HepG2 (cell line): ENCODE measurements at regions of chr14 and their contacts with region 1.

Region 1: DNA sequence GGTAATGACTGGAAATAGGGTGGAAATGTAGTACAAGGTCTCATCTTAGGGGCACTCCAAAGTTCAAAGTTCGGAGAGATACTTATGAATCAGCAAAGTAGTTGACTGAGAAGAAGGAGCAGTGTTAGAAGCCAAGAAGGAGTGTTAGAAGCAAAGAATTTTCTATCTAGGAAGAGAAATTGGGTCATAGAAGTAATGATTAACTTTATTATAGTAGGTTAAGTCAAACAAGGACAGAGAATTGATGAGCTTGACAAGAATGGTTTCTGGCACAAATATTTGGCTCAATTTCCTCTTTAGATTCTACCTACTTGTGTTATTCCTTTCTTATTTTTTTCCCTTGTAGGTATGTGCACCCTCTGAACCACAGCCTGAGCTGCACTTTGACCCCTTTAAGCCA is 810.5 kb upstream of the LRFN5 start:
- DNase-seq: no peak
- ATAC-seq: no peak
- H3K4me3 ChIP-seq: no peak overlapping the region
- H3K27ac ChIP-seq: no peak overlapping the region
- H3K4me1 ChIP-seq: no peaks in the 10 kb centered on the region
- H3K27me3 ChIP-seq: no peaks in the 10 kb centered on the region
- CTCF ChIP-seq: no peak
- EP300 ChIP-seq: no peak
- POLR2A ChIP-seq: no peak
- RAD21 ChIP-seq: no peak

Region 2: DNA sequence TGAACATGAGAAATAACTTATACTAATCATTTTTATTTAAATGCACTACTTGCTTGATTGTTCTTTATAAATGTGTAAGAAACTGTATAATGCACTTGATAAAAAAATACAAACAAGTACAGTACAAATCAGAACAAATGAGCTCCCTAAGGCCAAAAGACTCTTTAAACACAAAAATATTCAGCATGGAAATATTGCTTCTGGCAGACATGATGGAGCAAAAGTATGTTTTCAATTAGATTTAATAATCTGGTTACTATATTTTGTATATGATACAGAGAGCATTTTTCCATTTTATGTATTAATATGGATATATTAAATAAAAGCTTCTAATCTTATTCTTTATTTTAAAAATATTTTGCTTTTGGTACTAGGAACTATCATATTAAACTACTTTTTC is 10.3 kb after region 1 on chr14:
- CTCF ChIA-PET with region 1: no interaction called
- POLR2A ChIA-PET with region 1: no interaction called
- in situ Hi-C with region 1: no loop called
- intact Hi-C with region 1: loop called (anchors 1 kb)
- DNase-seq: no peak
- ATAC-seq: no peak
- H3K4me3 ChIP-seq: no peak overlapping the region
- H3K27ac ChIP-seq: no peak overlapping the region
- H3K4me1 ChIP-seq: no peaks in the 10 kb centered on the region
- H3K27me3 ChIP-seq: no peaks in the 10 kb centered on the region
- CTCF ChIP-seq: no peak
- EP300 ChIP-seq: no peak
- POLR2A ChIP-seq: no peak
- RAD21 ChIP-seq: no peak